ENCODE measurements at regions of chr17 and their contacts with region 1.

Region 1: GRCh38 chr17:30021708-30022317 is 80.4 kb downstream of the EFCAB5 start:
- DNase-seq: peak; percentile 41
- H3K4me3 Mint-ChIP-seq: no peak overlapping the region
- H3K27ac Mint-ChIP-seq: no peak overlapping the region
- H3K4me1 Mint-ChIP-seq: no peaks in the 10 kb centered on the region
- H3K27me3 Mint-ChIP-seq: no peaks in the 10 kb centered on the region
- CTCF ChIP-seq: peak; percentile 38

Region 2: GRCh38 chr17:29579866-29580771 is 441.7 kb before region 1 on chr17:
- CTCF ChIA-PET with region 1: no interaction called
- intact Hi-C with region 1: loop called (anchors 2 kb)
- DNase-seq: peak; percentile 90
- H3K4me3 Mint-ChIP-seq: no peak overlapping the region
- H3K27ac Mint-ChIP-seq: no peak overlapping the region
- H3K4me1 Mint-ChIP-seq: peaks cover 9% of the 10 kb centered on the region
- H3K27me3 Mint-ChIP-seq: no peaks in the 10 kb centered on the region
- CTCF ChIP-seq: peak; percentile 81

Region 3: GRCh38 chr17:29640413-29640812 is 381.4 kb before region 1 on chr17:
- CTCF ChIA-PET with region 1: interaction called, 5 read pairs
- intact Hi-C with region 1: loop called (anchors 5 kb)
- DNase-seq: no peak
- H3K4me3 Mint-ChIP-seq: no peak overlapping the region
- H3K27ac Mint-ChIP-seq: no peak overlapping the region
- H3K4me1 Mint-ChIP-seq: peaks cover 18% of the 10 kb centered on the region
- H3K27me3 Mint-ChIP-seq: no peaks in the 10 kb centered on the region
- CTCF ChIP-seq: no peak

Region 4: DNA sequence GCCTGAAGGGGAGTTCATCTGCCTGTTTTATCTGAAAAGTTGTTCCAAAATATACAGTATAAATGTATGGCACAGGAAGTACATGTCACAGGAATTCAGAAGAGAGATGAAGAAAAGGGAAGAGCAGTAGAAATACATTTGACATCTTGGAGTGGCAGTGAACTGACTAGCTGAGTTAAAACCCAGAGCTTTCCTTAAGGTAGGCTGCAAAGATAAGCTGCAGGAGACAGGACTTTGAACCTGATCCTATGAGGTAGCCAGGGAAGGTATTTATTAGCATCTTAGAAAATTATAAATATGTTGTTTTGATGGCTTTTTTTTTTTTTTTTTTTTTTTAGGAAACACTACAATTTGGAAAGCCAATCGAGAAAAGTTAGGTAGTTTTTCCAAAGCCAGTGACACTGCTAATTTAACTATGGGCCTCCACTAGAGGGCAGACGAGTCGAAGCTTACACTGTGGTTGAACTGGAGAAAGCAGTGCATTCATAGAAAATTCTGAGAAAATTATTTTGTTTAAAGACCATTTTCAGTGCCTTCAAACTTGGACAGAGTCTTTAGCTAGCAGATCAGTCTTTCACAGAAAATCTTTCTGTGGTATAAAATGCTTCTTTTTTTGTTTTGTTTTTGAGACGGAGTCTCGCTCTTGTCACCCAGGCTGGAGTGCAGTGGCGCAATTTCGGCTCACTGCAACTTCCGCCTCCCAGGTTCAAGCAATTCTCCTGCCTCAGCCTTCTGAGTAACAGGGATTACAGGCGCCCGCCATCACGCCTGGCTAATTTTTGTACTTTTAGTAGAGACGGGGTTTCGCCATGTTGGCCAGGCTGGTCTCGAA is 214.1 kb before region 1 on chr17:
- CTCF ChIA-PET with region 1: interaction called, 12 read pairs
- intact Hi-C with region 1: loop called (anchors 2 kb)
- DNase-seq: peak; percentile 81
- H3K4me3 Mint-ChIP-seq: no peak overlapping the region
- H3K27ac Mint-ChIP-seq: no peak overlapping the region
- H3K4me1 Mint-ChIP-seq: no peaks in the 10 kb centered on the region
- H3K27me3 Mint-ChIP-seq: no peaks in the 10 kb centered on the region
- CTCF ChIP-seq: peak; percentile 47

Region 5: GRCh38 chr17:30263552-30264333 is 241.9 kb after region 1 on chr17:
- CTCF ChIA-PET with region 1: no interaction called
- intact Hi-C with region 1: no loop called
- DNase-seq: no peak
- H3K4me3 Mint-ChIP-seq: no peak overlapping the region
- H3K27ac Mint-ChIP-seq: no peak overlapping the region
- H3K4me1 Mint-ChIP-seq: no peaks in the 10 kb centered on the region
- H3K27me3 Mint-ChIP-seq: no peaks in the 10 kb centered on the region
- CTCF ChIP-seq: no peak